Activated CD4-positive, alpha-beta T cell treated with anti-CD3 and anti-CD28 coated beads for 36 hours (primary cell): ENCODE measurements at regions of chr5 and their contacts with region 1.

Region 1: GRCh38 chr5:55711968-55712859 is at the start of gene SLC38A9:
- DNase-seq: peak; percentile 97
- ATAC-seq: peak; percentile 100
- H3K4me3 Mint-ChIP-seq: peak within 1 kb of the TSS; percentile 93
- H3K27ac Mint-ChIP-seq: peak within 1 kb of the TSS; percentile 92
- H3K4me1 Mint-ChIP-seq: peaks cover 24% of the 10 kb centered on the region
- H3K27me3 Mint-ChIP-seq: no peaks in the 10 kb centered on the region
- total RNA-seq, gene SLC38A9: 12.9 to 16.2 TPM

Region 2: DNA sequence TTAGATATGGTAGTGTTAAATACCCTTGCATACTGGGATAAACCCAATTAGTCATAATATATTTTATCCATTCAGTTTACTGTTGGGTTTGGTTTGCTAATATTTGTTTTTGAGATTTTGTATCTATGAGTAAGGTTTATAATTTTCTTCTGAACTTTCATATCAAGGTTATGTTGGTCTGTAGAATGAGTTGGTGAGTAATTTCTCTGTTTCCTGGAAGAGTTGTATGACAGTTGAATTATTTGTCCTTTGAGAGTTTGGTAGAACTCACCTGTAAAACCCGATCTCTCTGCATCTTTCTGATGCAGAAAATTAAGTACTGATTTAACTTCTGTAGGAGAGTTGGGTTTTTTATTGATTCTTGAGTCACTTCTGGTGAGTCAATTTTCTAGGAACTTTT is 46.0 kb after region 1 on chr5:
- CTCF ChIA-PET with region 1: no interaction called
- POLR2A ChIA-PET with region 1: no interaction called
- intact Hi-C with region 1: loop called in 1 of 2 experiments (anchors 5 kb)
- DNase-seq: no peak
- ATAC-seq: peak; percentile 92
- H3K4me3 Mint-ChIP-seq: peak overlapping the region; percentile 3
- H3K27ac Mint-ChIP-seq: no peak overlapping the region
- H3K4me1 Mint-ChIP-seq: peaks cover 9% of the 10 kb centered on the region
- H3K27me3 Mint-ChIP-seq: peaks cover 12% of the 10 kb centered on the region

Region 3: GRCh38 chr5:55903121-55903701 is 191.0 kb after region 1 on chr5:
- CTCF ChIA-PET with region 1: no interaction called
- POLR2A ChIA-PET with region 1: no interaction called
- intact Hi-C with region 1: loop called in 1 of 2 experiments (anchors 5 kb)
- DNase-seq: peak; percentile 86
- ATAC-seq: peak; percentile 89
- H3K4me3 Mint-ChIP-seq: no peak overlapping the region
- H3K27ac Mint-ChIP-seq: peak overlapping the region; percentile 13
- H3K4me1 Mint-ChIP-seq: peaks cover 33% of the 10 kb centered on the region
- H3K27me3 Mint-ChIP-seq: peaks cover 11% of the 10 kb centered on the region